Mammary epithelial cell (primary cell): ENCODE measurements at regions of chr4 and their contacts with region 1.

Region 1: GRCh38 chr4:74410272-74410671 is 34.7 kb upstream of the AREG start:
- DNase-seq: peak; percentile 98
- H3K4me3 ChIP-seq: peak overlapping the region in 1 of 3 experiments; percentile 8
- H3K27ac ChIP-seq: peak overlapping the region; percentile 99
- H3K4me1 ChIP-seq: peaks cover 71% of the 10 kb centered on the region
- H3K27me3 ChIP-seq: no peaks in the 10 kb centered on the region
- CTCF ChIP-seq: no peak

Region 2: GRCh38 chr4:74255096-74255495 is 155.2 kb before region 1 on chr4:
- CTCF ChIA-PET with region 1: no interaction called
- dilution Hi-C with region 1: no loop called
- in situ Hi-C with region 1: no loop called
- intact Hi-C with region 1: no loop called
- DNase-seq: no peak
- H3K4me3 ChIP-seq: no peak overlapping the region
- H3K27ac ChIP-seq: no peak overlapping the region
- H3K4me1 ChIP-seq: no peaks in the 10 kb centered on the region
- H3K27me3 ChIP-seq: no peaks in the 10 kb centered on the region
- CTCF ChIP-seq: no peak

Region 3: DNA sequence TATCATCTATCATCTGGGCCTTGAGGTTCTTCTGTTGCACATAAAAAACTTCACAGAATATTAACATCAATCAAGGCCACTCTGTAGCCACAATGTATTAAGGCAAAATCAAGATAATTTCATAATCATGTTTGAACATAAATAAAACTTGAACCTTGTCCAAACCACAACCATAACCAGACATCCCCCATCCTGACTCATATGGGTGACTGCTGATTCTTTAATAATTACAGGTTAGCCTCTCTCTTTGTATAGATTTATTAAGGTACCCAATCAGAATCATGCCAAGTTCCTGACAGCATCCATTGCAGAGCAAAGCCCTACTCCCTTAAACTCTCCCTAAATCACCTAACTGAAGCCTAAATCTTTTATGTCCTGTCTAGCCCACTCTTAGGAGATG is 18.0 kb after region 1 on chr4:
- CTCF ChIA-PET with region 1: no interaction called
- dilution Hi-C with region 1: no loop called
- in situ Hi-C with region 1: no loop called
- intact Hi-C with region 1: loop called (anchors 1 kb)
- DNase-seq: peak; percentile 89
- H3K4me3 ChIP-seq: no peak overlapping the region
- H3K27ac ChIP-seq: peak overlapping the region; percentile 95
- H3K4me1 ChIP-seq: peaks cover 65% of the 10 kb centered on the region
- H3K27me3 ChIP-seq: no peaks in the 10 kb centered on the region
- CTCF ChIP-seq: no peak

Region 4: GRCh38 chr4:74444891-74445642 is 34.8 kb after region 1 on chr4 and contains the start of gene AREG:
- CTCF ChIA-PET with region 1: interaction called, 3 read pairs
- dilution Hi-C with region 1: no loop called
- in situ Hi-C with region 1: loop called (anchors 5 kb)
- intact Hi-C with region 1: loop called (anchors 1 kb)
- DNase-seq: peak; percentile 92
- H3K4me3 ChIP-seq: peak within 1 kb of the TSS; percentile 83 to 93 (median 93)
- H3K27ac ChIP-seq: peak within 1 kb of the TSS; percentile 99
- H3K4me1 ChIP-seq: peaks cover 34% of the 10 kb centered on the region
- H3K27me3 ChIP-seq: no peaks in the 10 kb centered on the region
- CTCF ChIP-seq: peak; percentile 24 to 63
- total RNA-seq, gene AREG: 540 to 2,145 TPM